ENCODE measurements at regions of chr15 and their contacts with region 1.

Region 1: DNA sequence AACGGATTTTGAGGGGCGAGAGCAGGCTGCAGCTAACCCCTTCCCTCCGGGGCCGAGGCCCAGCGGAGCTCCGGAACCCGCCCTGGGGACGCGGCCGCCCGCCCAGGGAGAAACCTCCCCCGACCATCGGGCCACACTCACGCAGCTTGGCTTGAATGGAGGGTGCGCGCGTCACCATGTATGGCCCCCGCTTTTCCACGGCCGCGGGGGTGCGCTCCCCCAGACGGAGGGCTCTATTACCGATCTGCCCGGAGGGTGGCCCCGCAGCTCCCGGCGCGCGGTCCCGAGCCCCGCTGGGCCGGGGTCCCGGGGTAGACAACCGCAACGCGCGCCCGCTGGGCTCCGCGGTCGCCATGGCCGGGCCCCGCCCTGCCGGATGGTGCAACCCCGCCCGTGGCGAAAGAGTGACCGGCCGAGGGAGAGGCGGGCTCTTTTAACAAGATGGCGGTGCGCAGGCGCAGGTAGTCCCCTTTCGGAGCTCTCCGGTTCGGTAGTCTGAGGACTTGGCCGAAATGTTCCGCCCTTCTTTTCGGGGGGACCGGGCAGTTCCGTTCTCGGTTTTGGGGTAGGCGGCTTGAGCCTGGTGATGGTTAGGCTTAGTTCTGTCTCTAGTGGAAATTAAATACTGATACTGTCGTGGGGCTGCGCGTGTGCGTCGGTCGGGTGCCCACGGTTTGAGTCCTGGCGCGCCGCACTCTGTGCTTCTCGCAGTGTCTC is at the start of gene FAM219B:
- DNase-seq: peak; percentile 93
- ATAC-seq: peak; percentile 90
- H3K4me3 Mint-ChIP-seq: peak within 1 kb of the TSS; percentile 94
- H3K27ac Mint-ChIP-seq: peak within 1 kb of the TSS; percentile 94
- H3K4me1 Mint-ChIP-seq: peaks cover 15% of the 10 kb centered on the region
- H3K27me3 Mint-ChIP-seq: no peaks in the 10 kb centered on the region
- CTCF ChIP-seq: no peak
- total RNA-seq, gene FAM219B: 67.3 to 99.6 TPM (median 87.8 TPM) in 3 replicates

Region 2: GRCh38 chr15:74787251-74788041 is 119.2 kb before region 1 on chr15:
- CTCF ChIA-PET with region 1: interaction called, 13 read pairs
- POLR2A ChIA-PET with region 1: no interaction called
- DNase-seq: peak; percentile 80
- ATAC-seq: peak; percentile 82
- H3K4me3 Mint-ChIP-seq: no peak overlapping the region
- H3K27ac Mint-ChIP-seq: no peak overlapping the region
- H3K4me1 Mint-ChIP-seq: peaks cover 49% of the 10 kb centered on the region
- H3K27me3 Mint-ChIP-seq: no peaks in the 10 kb centered on the region; the same call in 1 of the 2 replicates
- CTCF ChIP-seq: peak; percentile 35

Region 3: DNA sequence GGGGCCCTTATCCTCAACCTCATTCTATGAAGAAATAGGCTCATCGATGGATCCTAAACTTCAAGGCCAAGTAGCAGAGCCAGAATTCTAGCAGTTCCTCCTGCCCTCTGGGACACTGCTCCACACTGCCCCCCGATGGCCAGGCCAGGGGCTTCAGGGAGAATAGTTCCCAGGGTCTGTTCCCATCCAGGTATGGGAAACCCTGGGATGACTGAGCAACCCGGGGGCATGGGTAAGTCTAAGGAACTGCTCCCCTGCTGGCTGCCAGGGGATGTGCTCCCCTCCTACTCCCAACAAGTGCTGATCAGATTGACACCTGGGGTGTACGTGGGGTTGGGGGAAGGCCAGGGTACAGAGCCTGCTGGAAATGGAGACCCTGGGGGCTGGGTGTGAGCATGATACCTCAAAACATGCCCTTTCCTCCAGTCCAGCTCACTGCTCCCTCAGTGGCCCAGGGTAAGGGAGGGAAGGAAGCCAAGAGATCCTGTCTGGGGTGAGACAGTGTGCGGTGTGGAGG is 71.2 kb before region 1 on chr15:
- CTCF ChIA-PET with region 1: interaction called, 26 read pairs
- POLR2A ChIA-PET with region 1: no interaction called
- DNase-seq: peak; percentile 96
- ATAC-seq: peak; percentile 94
- H3K4me3 Mint-ChIP-seq: no peak overlapping the region
- H3K27ac Mint-ChIP-seq: peak overlapping the region; percentile 77
- H3K4me1 Mint-ChIP-seq: peaks cover 9% of the 10 kb centered on the region
- H3K27me3 Mint-ChIP-seq: no peaks in the 10 kb centered on the region
- CTCF ChIP-seq: peak; percentile 82

Region 4: GRCh38 chr15:74873036-74873755 is 33.4 kb before region 1 on chr15 and contains the start of gene SCAMP2:
- CTCF ChIA-PET with region 1: interaction called, 13 read pairs
- POLR2A ChIA-PET with region 1: interaction called, 3 read pairs
- DNase-seq: peak; percentile 96
- ATAC-seq: peak; percentile 97
- H3K4me3 Mint-ChIP-seq: peak within 1 kb of the TSS; percentile 93
- H3K27ac Mint-ChIP-seq: peak within 1 kb of the TSS; percentile 93
- H3K4me1 Mint-ChIP-seq: peaks cover 20% of the 10 kb centered on the region
- H3K27me3 Mint-ChIP-seq: no peaks in the 10 kb centered on the region; the same call in 1 of the 2 replicates
- CTCF ChIP-seq: no peak
- total RNA-seq, gene SCAMP2: 38.0 to 47.0 TPM (median 39.0 TPM) in 3 replicates

Region 5: DNA sequence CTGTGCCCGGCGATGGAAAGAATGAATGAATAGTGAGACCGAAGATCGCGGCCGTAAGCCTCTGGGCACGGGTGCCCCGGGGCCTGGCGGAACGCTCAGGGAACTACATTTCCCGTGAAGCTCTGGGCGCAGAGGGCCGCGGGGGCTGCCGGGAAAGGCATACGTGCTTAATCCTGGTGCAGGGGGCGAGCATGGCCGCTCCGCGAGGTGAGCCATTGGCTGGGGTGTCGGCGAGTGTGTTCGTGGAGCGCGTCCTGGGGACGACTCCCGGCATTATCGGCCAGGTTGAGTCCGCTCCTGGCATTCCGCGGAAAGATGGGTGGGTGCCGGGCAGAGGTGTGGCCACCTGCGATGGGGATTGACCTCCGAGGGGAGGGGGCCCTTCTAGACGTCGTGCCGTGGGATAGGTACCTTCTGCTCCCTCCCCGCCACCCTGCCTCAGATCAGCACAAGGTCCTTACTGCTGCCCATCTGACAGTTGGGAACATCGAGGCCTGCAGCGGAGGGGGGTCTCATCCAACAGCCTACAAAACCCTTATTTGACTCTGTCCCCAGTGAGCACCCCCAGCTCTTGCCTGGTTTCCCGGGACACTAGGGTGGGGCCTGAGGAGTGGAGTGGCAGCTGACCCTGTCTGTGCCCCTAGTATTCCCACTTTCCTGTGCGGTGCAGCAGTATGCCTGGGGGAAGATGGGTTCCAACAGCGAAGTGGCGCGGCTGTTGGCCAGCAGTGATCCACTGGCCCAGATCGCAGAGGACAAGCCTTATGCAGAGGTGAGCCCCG is 16.5 kb before region 1 on chr15 and contains the start of gene MPI:
- CTCF ChIA-PET with region 1: interaction called, 45 read pairs
- POLR2A ChIA-PET with region 1: interaction called, 5 read pairs
- DNase-seq: peak; percentile 90
- ATAC-seq: peak; percentile 93
- H3K4me3 Mint-ChIP-seq: peak within 1 kb of the TSS; percentile 91
- H3K27ac Mint-ChIP-seq: peak within 1 kb of the TSS; percentile 88
- H3K4me1 Mint-ChIP-seq: peaks cover 22% of the 10 kb centered on the region
- H3K27me3 Mint-ChIP-seq: no peaks in the 10 kb centered on the region; the same call in 1 of the 2 replicates
- CTCF ChIP-seq: no peak
- total RNA-seq, gene MPI: 36.3 to 65.1 TPM (median 59.8 TPM) in 3 replicates

Region 6: GRCh38 chr15:74956648-74957300 is 50.2 kb after region 1 on chr15 and contains the start of gene RPP25:
- CTCF ChIA-PET with region 1: interaction called, 37 read pairs
- POLR2A ChIA-PET with region 1: interaction called, 4 read pairs
- DNase-seq: peak; percentile 86
- ATAC-seq: peak; percentile 79
- H3K4me3 Mint-ChIP-seq: peak within 1 kb of the TSS; percentile 88
- H3K27ac Mint-ChIP-seq: peak within 1 kb of the TSS; percentile 78; the same call in 1 of the 2 replicates
- H3K4me1 Mint-ChIP-seq: peaks cover 39% of the 10 kb centered on the region
- H3K27me3 Mint-ChIP-seq: peaks cover 56% of the 10 kb centered on the region
- CTCF ChIP-seq: no peak
- total RNA-seq, gene RPP25: 28.3 to 31.3 TPM (median 29.0 TPM) in 3 replicates

Region 7: DNA sequence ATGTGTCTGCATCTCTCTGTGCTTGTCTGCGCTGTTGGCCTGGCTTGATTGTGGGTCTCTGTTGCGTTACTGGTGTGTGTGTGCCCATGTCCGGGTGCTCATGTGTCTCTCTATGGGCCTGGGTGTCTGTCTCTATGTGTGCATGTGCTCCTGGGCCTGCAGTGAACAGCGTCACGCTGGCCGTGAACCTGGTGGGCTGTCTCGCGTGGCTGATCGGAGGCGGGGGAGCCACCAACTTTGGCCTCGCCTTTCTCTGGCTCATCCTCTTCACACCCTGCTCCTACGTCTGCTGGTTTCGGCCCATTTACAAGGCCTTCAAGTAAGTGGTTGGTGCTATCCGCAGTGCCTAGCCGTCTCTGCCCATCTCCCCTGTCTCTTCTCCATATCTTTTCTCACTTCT is 109.8 kb after region 1 on chr15:
- CTCF ChIA-PET with region 1: no interaction called
- POLR2A ChIA-PET with region 1: no interaction called
- DNase-seq: no peak
- ATAC-seq: no peak
- H3K4me3 Mint-ChIP-seq: no peak overlapping the region
- H3K27ac Mint-ChIP-seq: no peak overlapping the region
- H3K4me1 Mint-ChIP-seq: no peaks in the 10 kb centered on the region
- H3K27me3 Mint-ChIP-seq: no peaks in the 10 kb centered on the region
- CTCF ChIP-seq: no peak

Region 8: GRCh38 chr15:75107908-75108838 is 201.6 kb after region 1 on chr15:
- CTCF ChIA-PET with region 1: no interaction called
- POLR2A ChIA-PET with region 1: no interaction called
- DNase-seq: no peak
- ATAC-seq: no peak
- H3K4me3 Mint-ChIP-seq: no peak overlapping the region
- H3K27ac Mint-ChIP-seq: no peak overlapping the region
- H3K4me1 Mint-ChIP-seq: no peaks in the 10 kb centered on the region
- H3K27me3 Mint-ChIP-seq: peaks cover 2% of the 10 kb centered on the region; the same call in 1 of the 2 replicates
- CTCF ChIP-seq: no peak

Region 9: GRCh38 chr15:75171408-75171807 is 264.8 kb after region 1 on chr15:
- CTCF ChIA-PET with region 1: no interaction called
- POLR2A ChIA-PET with region 1: no interaction called
- DNase-seq: no peak
- ATAC-seq: no peak
- H3K4me3 Mint-ChIP-seq: no peak overlapping the region
- H3K27ac Mint-ChIP-seq: no peak overlapping the region
- H3K4me1 Mint-ChIP-seq: peaks cover 6% of the 10 kb centered on the region
- H3K27me3 Mint-ChIP-seq: peaks cover 4% of the 10 kb centered on the region
- CTCF ChIP-seq: no peak